ENCODE measurements at regions of chr10 and their contacts with region 1.

Region 1: DNA sequence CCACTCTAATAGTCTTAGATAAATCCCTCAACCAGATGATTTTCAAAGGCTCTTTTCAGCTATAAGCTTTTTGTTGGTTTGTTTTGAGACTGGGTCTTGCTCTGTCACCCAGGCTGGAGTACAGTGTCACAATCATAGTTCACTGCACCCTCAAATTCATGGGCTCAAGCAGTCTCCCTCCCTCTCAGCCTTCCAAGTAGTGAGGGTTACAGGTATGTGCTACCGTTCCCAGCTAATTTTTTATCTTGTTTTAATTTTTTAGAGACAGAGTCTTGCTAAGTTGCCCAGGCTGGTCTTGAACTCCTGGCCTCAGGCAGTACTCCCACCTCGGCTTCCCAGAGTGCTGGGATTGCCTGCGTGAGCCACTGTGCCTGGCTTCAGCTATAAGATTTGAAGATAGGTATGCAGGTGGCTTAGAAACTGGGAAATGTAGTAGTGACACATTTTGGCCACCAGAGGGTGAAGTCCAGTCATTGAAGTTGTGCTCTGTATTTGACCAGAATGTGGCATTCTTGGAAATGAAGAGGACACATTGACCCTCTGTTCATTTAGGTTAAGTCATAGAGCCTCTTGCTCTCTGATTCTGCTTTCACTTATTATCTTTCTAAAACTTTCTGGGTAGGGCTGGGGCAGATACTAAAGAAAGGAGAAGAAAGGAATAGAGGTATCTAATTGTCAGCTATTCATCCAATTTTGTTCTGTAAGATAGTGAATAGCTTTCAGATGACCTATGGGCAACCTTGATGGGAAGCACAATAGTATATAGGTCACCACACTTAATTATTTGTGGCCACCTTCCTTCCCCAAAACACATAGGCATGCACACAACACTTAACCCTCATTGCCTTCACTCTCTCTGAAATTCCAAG is 36.0 kb downstream of the R3HCC1L start:
- H3K4me3 ChIP-seq: no peak overlapping the region
- H3K27ac ChIP-seq: no peak overlapping the region
- H3K4me1 ChIP-seq: 0 out of 2 replicates have a peak, but pooled peaks cover 3% of the 10 kb centered on the region
- CTCF ChIP-seq: peak; percentile 55; the same call in 1 of the 2 replicates

Region 2: DNA sequence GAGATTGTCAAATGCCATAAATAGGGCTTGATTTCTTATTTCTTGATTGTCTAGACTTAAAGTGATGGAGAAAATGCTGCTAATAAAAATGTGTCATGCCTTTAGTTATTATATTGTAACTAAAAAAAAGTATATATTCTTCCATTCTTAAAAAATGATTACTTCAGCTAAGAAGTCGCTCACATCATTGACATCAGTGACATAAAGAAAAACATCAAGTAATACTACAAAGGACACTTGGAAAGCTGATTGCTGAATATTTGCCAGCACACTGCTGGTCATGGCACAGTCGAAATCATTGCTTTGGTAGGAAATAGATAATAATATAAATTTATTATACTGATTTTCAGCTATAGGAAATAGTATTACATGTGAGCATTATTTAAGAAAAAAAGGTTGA is 34.9 kb after region 1 on chr10:
- CTCF ChIA-PET with region 1: interaction called, 13 read pairs
- POLR2A ChIA-PET with region 1: no interaction called
- H3K4me3 ChIP-seq: no peak overlapping the region
- H3K27ac ChIP-seq: no peak overlapping the region
- H3K4me1 ChIP-seq: no peaks in the 10 kb centered on the region
- CTCF ChIP-seq: no peak

Region 3: GRCh38 chr10:98231417-98231816 is 60.9 kb after region 1 on chr10:
- CTCF ChIA-PET with region 1: no interaction called
- POLR2A ChIA-PET with region 1: no interaction called
- H3K4me3 ChIP-seq: no peak overlapping the region
- H3K27ac ChIP-seq: no peak overlapping the region
- H3K4me1 ChIP-seq: no peaks in the 10 kb centered on the region
- CTCF ChIP-seq: no peak

Region 4: DNA sequence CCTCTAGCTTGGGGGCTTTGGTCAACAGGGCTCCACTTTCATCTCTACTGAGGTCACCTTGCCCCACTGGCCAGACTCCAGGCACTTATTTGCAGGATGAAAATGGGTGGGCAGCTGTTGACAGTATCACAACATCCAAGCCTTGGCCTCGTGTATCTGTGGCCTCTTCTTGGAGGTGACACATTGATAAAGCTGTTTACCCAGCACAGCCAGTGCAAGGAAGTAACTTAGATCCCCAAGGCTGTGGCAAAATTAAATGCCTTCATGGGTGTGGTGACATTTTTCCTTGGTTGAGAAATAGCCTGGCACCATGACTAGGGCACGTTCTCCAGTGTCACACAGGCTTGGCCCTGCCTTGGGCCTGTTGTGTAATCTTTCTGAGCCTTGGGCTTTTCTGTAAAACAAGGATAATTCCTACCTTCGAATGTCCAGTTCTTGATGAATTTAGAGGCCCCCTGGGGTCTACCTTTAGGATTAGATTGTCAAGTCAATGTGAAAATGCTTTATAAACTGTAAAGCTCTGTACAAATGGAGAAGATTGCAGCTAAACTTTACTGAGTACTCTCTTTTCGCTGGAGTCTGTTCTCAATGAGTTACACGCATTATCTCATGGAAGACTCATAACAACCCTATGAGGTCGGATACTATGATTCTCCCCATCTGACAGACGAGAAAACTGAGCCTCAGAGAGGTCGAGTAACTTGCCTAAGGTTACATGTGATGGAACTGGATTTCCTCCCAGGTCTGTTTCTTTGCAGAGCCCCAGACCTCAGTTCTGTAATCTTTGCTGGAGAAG is 144.2 kb after region 1 on chr10:
- CTCF ChIA-PET with region 1: interaction called, 105 read pairs
- POLR2A ChIA-PET with region 1: no interaction called
- H3K4me3 ChIP-seq: no peak overlapping the region
- H3K27ac ChIP-seq: no peak overlapping the region
- H3K4me1 ChIP-seq: no peaks in the 10 kb centered on the region
- CTCF ChIP-seq: no peak